IMR-90 (cell line): ENCODE measurements at regions of chr9 and their contacts with region 1.

Region 1: GRCh38 chr9:76818271-76818670 is 54.0 kb downstream of the PCA3 start:
- DNase-seq: peak; percentile 98
- ATAC-seq: peak; percentile 99
- H3K4me3 ChIP-seq: no peak overlapping the region
- H3K27ac ChIP-seq: peak overlapping the region; percentile 38
- H3K4me1 ChIP-seq: peaks cover 8% of the 10 kb centered on the region
- H3K27me3 ChIP-seq: no peaks in the 10 kb centered on the region
- CTCF ChIP-seq: no peak
- POLR2A ChIP-seq: peak; percentile 23; the same call in 1 of the 2 replicates
- RAD21 ChIP-seq: peak; percentile 27

Region 2: DNA sequence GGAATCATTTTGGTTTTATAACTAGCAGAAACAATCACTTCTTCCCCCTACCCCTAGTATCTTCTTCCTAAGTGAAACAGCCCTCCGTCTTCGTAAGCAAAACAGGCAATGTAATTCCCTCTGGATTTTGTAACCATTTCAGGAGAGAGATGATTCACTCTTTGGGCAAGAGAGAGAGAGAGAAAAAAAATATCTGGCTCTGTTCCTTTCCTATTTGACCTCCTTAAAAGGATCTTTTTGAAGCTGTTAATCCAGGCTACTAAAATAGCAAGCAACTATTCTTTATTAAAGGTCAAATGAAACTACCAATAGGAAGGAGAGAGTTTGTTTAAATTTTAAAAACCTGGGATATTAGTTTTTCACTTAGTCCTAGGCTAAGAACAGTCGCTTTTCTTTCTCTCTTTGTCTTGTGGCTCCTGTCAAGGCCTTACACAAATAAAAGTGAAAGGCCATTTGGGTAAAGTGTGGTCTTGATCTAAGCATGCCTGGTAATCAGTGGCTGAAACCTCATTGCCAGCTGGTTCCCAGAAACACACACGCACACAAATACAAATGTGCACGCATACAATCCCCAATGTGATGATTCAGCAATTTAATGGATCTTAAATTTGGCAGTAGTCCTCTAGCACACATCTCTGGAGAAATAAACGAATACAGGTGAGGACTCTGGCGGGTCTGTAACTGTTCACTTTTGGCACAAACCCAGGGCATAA is 17.5 kb after region 1 on chr9:
- CTCF ChIA-PET with region 1: no interaction called
- POLR2A ChIA-PET with region 1: no interaction called
- dilution Hi-C with region 1: no loop called
- in situ Hi-C with region 1: no loop called
- intact Hi-C with region 1: loop called (anchors 2 kb)
- DNase-seq: peak; percentile 87
- ATAC-seq: peak; percentile 90
- H3K4me3 ChIP-seq: no peak overlapping the region
- H3K27ac ChIP-seq: peak overlapping the region; percentile 93
- H3K4me1 ChIP-seq: peaks cover 8% of the 10 kb centered on the region
- H3K27me3 ChIP-seq: no peaks in the 10 kb centered on the region
- CTCF ChIP-seq: no peak
- POLR2A ChIP-seq: peak; percentile 29; the same call in 1 of the 2 replicates
- RAD21 ChIP-seq: no peak

Region 3: DNA sequence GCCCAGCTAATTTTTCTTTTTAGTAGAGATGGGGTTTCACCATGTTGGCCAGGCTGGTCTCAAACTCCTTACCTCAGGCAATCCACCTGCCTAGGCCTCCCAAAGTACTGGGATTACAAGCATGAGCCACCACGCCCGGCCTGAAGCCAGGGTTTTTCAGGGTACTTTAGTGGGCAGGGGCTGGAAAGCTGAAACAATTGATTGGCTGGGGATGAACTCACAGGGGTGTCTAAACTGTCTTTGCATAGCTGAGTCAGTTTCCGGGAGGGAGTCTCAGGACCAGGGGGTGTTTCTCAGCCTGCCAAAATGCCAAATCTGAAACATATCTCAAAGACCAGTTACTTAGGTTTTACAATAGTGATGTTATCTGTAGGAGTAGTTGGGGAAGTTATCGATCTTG is 41.6 kb after region 1 on chr9:
- CTCF ChIA-PET with region 1: no interaction called
- POLR2A ChIA-PET with region 1: no interaction called
- dilution Hi-C with region 1: no loop called
- in situ Hi-C with region 1: loop called (anchors 5 kb)
- intact Hi-C with region 1: no loop called
- DNase-seq: no peak
- ATAC-seq: no peak
- H3K4me3 ChIP-seq: no peak overlapping the region
- H3K27ac ChIP-seq: no peak overlapping the region
- H3K4me1 ChIP-seq: peaks cover 2% of the 10 kb centered on the region; the same call in 1 of the 2 replicates
- H3K27me3 ChIP-seq: no peaks in the 10 kb centered on the region
- CTCF ChIP-seq: no peak
- POLR2A ChIP-seq: no peak
- RAD21 ChIP-seq: no peak

Region 4: DNA sequence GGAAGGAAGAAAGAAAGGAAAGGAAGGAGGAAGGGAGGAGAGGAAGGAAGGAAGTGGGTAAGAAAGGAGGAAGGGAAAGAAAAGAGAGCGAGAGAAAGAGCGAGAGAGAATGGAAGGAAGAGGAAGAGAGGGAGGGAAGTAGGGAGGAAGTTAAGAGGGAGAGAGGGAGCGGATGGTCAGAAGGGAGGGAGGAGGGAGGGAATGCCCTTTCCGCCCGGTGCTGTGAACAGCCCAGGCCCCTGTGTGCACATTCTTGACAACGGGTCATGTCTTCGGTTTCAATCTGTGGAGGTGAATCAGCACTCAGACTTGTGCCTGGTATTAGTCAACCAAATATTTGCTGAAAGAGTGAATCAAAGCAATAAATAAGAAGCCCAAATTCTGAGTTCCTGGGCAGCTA is 48.4 kb after region 1 on chr9:
- CTCF ChIA-PET with region 1: no interaction called
- POLR2A ChIA-PET with region 1: no interaction called
- dilution Hi-C with region 1: no loop called
- in situ Hi-C with region 1: loop called (anchors 5 kb)
- intact Hi-C with region 1: loop called (anchors 1 kb)
- DNase-seq: peak; percentile 95
- ATAC-seq: peak; percentile 98
- H3K4me3 ChIP-seq: no peak overlapping the region
- H3K27ac ChIP-seq: peak overlapping the region; percentile 73
- H3K4me1 ChIP-seq: peaks cover 9% of the 10 kb centered on the region
- H3K27me3 ChIP-seq: no peaks in the 10 kb centered on the region
- CTCF ChIP-seq: no peak
- POLR2A ChIP-seq: no peak
- RAD21 ChIP-seq: no peak

Region 5: DNA sequence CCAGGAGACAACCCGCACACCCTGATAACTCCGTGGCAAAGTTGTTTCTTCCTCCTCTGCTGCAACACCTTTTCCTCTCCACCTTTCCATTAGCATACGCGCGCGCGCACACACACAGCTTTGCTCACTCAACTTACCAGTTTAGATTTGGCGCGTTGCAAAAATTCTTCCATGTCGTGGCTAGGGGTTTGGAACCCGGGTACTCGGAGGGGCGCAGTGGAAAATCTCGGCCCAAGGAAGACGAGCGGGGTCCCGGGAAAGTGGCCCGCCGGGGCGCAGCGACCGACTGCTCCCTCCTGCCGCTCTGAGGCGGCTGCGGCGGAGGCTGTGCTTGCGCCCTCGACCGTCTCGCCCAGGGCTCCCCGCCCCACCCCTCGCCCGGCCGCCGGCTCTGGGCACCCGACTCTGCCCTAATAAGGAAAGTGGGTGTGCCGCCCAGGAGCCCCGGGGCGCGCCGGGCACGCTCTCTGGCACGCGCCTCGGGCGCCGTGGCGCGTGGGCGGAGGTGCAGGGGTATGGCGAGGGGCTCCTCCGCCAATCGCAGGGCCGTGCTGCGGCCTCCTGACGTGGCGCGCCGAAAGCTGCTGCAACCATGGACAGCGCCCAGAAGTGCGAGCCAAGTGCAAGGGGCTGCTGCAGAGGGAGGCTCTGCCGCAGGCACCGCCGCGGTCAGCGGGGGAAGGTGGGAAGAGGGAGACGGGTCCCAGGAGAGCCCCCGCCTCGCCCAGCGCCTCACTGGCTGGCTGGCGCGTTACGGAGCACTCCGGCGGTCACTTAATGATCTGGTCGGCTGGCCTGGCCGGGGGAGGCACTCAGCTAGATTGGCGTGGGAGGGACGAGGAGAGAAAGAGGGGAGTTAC is 87.8 kb after region 1 on chr9 and contains the start of gene PRUNE2:
- CTCF ChIA-PET with region 1: interaction called, 3 read pairs
- POLR2A ChIA-PET with region 1: no interaction called
- dilution Hi-C with region 1: no loop called
- in situ Hi-C with region 1: loop called (anchors 5 kb)
- intact Hi-C with region 1: loop called (anchors 2 kb)
- DNase-seq: peak; percentile 79
- ATAC-seq: peak; percentile 97
- H3K4me3 ChIP-seq: peak within 1 kb of the TSS; percentile 42
- H3K27ac ChIP-seq: no peak within 1 kb of the TSS
- H3K4me1 ChIP-seq: peaks cover 2% of the 10 kb centered on the region; the same call in 1 of the 2 replicates
- H3K27me3 ChIP-seq: peaks cover 16% of the 10 kb centered on the region
- CTCF ChIP-seq: no peak
- POLR2A ChIP-seq: no peak
- RAD21 ChIP-seq: no peak
- total RNA-seq, gene PRUNE2: 1.4 and 1.6 TPM in 2 replicates

Region 6: GRCh38 chr9:76962732-76963131 is 144.5 kb after region 1 on chr9:
- CTCF ChIA-PET with region 1: no interaction called
- POLR2A ChIA-PET with region 1: no interaction called
- dilution Hi-C with region 1: no loop called
- in situ Hi-C with region 1: no loop called
- intact Hi-C with region 1: no loop called
- DNase-seq: no peak
- ATAC-seq: no peak
- H3K4me3 ChIP-seq: no peak overlapping the region
- H3K27ac ChIP-seq: no peak overlapping the region
- H3K4me1 ChIP-seq: no peaks in the 10 kb centered on the region
- H3K27me3 ChIP-seq: peaks cover 3% of the 10 kb centered on the region
- CTCF ChIP-seq: no peak
- POLR2A ChIP-seq: no peak
- RAD21 ChIP-seq: no peak